ENCODE measurements at regions of chr15 and their contacts with region 1.

Region 1: GRCh38 chr15:80776420-80777045 is 2.6 kb upstream of the CEMIP start:
- DNase-seq: peak; percentile 47
- H3K4me3 ChIP-seq: no peak overlapping the region
- H3K27ac ChIP-seq: peak overlapping the region; percentile 57
- H3K4me1 ChIP-seq: peaks cover 44% of the 10 kb centered on the region
- H3K27me3 ChIP-seq: peaks cover 42% of the 10 kb centered on the region
- CTCF ChIP-seq: peak; percentile 86

Region 2: GRCh38 chr15:80567721-80568157 is 208.8 kb before region 1 on chr15:
- intact Hi-C with region 1: loop called (anchors 5 kb)
- DNase-seq: no peak
- H3K4me3 ChIP-seq: no peak overlapping the region
- H3K27ac ChIP-seq: no peak overlapping the region
- H3K4me1 ChIP-seq: peaks cover 3% of the 10 kb centered on the region
- H3K27me3 ChIP-seq: peaks cover 24% of the 10 kb centered on the region
- CTCF ChIP-seq: peak; percentile 77

Region 3: DNA sequence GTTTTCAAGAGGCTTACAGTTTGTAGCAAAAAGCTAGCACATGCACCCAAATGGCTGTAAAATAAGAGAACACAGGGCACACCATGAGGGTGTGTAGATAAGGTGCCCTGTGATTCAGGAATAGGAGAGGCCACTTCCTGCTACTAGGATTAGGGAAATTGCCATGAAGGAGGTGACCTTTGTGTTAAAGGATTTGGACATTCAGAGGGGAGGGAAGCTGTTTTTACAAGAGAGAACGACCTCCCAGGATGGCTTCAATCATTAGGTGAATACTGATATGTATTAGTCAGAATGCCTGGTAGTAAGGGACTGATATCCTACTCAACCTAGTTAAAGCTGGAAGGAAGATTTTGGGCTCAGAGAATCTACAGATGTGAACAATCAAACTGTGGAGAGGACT is 117.2 kb before region 1 on chr15:
- intact Hi-C with region 1: loop called (anchors 10 kb)
- DNase-seq: no peak
- H3K4me3 ChIP-seq: no peak overlapping the region
- H3K27ac ChIP-seq: no peak overlapping the region
- H3K4me1 ChIP-seq: no peaks in the 10 kb centered on the region
- H3K27me3 ChIP-seq: peaks cover 26% of the 10 kb centered on the region
- CTCF ChIP-seq: no peak

Region 4: DNA sequence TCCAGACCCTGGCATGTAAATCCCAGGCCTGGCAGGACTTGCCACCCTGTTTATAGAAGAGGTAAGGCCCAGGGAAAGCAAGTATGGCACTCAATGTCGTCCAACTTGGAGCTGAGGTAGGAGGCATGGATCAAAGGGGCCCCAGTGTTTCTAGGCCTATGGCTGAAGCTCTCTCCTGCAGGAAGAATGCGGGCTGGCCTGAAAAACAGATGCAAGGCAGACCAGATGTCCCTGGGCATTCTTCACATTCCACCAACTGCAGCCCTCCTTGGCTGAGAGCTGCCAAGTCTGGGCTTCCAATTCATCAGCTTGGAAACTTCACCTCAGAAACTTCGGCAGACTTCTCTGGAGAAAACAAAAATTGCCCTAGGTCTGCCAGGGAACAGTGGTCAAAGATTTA is 190.9 kb after region 1 on chr15:
- intact Hi-C with region 1: loop called (anchors 10 kb)
- DNase-seq: no peak
- H3K4me3 ChIP-seq: no peak overlapping the region
- H3K27ac ChIP-seq: no peak overlapping the region
- H3K4me1 ChIP-seq: peaks cover 4% of the 10 kb centered on the region
- H3K27me3 ChIP-seq: no peaks in the 10 kb centered on the region
- CTCF ChIP-seq: no peak